Right ventricle myocardium inferior (tissue), 1 donor: ENCODE measurements at regions of chr10 and their contacts with region 1.

Region 1: DNA sequence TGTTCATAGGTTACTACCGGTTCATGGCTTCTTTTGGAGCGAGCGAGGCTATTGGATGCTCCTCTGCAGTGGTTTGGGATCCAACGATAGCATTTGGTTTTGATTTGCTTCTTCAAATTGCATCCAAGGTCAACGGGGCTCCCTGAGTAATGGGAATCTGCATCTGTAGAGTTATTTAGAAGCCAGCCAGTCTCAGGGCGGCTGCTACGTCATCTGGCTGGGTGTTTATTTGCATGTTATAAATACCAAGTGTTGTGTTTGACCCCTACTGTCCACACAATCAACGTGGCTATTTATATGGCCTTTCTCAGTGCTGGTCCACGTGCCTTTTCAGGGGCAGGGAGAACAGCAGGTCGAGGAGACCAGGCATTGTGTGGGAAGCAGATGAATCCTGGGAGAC is 137.7 kb downstream of the PRPF18 start:
- DNase-seq: no peak
- ATAC-seq: peak; percentile 80

Region 2: GRCh38 chr10:13684252-13684791 is 40.2 kb before region 1 on chr10:
- intact Hi-C with region 1: loop called (anchors 5 kb)
- DNase-seq: peak; percentile 89
- ATAC-seq: peak; percentile 75